Activated T-helper 1 cell treated with anti-CD3 and anti-CD28 coated beads, Interleukin-12 subunit alpha, Interleukin-12 subunit beta, Interleukin-2, Interleukin-4 antibody, amounts not matched to agents 30 ng/mL and 10 ng/mL and 1 ng/mL, durations not matched to agents 14 hours and 24 hours and 36 hours (primary cell): ENCODE measurements at regions of chr2 and their contacts with region 1.

Region 1: DNA sequence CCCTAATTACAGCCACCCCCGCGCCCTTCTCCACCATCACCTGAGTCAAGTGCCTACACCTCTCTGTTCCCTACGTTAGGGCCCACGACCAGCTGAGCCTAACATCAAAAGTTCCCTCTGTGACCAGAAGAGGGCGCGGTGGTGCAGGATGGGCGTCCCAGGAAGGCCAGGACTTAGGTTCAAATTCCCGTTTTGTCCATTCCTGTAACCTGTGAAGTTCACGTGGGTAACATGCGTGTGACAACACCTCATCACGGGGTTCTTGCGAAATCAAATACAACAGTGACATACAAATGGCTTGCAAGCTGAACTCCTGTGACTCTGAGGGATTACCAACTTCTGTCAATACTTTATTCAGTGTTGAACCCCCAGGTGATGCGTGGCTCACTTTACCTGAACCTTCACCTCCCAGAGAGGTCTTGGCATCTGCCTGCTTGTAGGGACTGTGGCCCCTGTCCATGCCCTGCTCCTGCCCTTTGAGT is 207.9 kb downstream of the ARL4C start:
- DNase-seq: peak; percentile 69
- H3K4me3 Mint-ChIP-seq: peak overlapping the region; percentile 80
- H3K27ac Mint-ChIP-seq: peak overlapping the region; percentile 99
- H3K4me1 Mint-ChIP-seq: peaks cover 91% of the 10 kb centered on the region
- H3K27me3 Mint-ChIP-seq: no peaks in the 10 kb centered on the region

Region 2: GRCh38 chr2:233756429-233757081 is 532.5 kb before region 1 on chr2:
- intact Hi-C with region 1: no loop called
- DNase-seq: no peak
- H3K4me3 Mint-ChIP-seq: no peak overlapping the region
- H3K27ac Mint-ChIP-seq: no peak overlapping the region
- H3K4me1 Mint-ChIP-seq: no peaks in the 10 kb centered on the region
- H3K27me3 Mint-ChIP-seq: peaks cover 2% of the 10 kb centered on the region

Region 3: DNA sequence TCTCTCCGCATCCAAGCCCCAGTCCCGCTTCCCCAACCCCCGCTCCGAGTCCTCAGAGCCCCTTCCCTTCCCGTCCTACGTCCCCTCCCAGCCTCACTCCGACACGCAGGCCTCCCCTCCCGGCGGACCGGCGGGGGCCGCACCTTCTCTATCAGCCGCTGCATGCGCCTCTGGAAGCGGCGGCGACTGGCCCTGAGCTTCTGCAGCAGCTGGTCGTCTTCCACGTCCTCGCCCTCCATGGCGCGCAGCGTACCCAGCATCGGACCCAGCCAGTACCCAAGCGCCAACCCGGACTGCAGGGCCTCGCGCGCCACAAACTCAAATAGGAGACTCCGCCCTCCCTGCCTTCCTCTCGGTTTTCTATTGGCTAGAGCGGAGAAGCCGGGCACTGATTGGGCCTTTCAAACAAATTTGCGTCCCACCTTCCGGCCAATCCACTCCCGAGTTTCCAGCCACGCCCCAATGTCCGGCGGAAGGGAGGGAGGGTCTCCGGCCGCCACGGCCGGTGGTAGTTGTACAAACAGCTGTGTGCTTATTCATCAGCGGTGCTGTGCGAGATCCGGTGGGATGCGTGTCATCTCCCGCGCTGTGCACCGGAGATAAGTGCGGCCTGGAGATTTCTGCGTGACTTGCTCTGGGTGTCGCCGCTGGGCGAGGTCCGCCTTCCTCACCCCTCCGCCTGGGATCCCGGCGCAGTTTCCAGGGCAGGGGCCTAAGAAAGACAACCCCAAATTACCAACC is 434.6 kb before region 1 on chr2 and contains the start of gene HJURP:
- intact Hi-C with region 1: loop called (anchors 10 kb)
- DNase-seq: peak; percentile 95
- H3K4me3 Mint-ChIP-seq: peak within 1 kb of the TSS; percentile 94
- H3K27ac Mint-ChIP-seq: peak within 1 kb of the TSS; percentile 97
- H3K4me1 Mint-ChIP-seq: peaks cover 63% of the 10 kb centered on the region
- H3K27me3 Mint-ChIP-seq: no peaks in the 10 kb centered on the region
- total RNA-seq, gene HJURP: 38.2 and 40.4 TPM in 2 replicates

Region 4: DNA sequence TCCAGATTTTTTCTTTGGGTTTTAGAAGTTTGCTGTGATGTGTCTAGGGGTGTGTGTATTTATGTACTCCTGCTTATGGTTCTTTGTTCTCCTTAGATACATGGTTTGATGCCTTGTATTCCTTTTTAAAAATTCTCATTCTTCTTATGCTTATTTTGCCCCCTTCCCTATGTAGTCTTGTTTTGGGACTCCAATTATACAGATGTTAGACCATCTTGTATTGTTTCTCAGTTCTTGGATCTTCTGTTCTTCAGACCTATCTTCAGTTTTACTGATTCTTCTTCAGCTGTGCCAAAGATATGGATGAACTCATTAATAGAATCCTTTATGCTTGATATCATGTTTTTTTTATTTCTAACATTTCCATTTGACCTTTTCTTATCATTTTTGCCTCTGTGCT is 406.7 kb before region 1 on chr2:
- intact Hi-C with region 1: no loop called
- DNase-seq: no peak
- H3K4me3 Mint-ChIP-seq: no peak overlapping the region
- H3K27ac Mint-ChIP-seq: no peak overlapping the region
- H3K4me1 Mint-ChIP-seq: no peaks in the 10 kb centered on the region
- H3K27me3 Mint-ChIP-seq: peaks cover 18% of the 10 kb centered on the region

Region 5: GRCh38 chr2:234135720-234136221 is 153.2 kb before region 1 on chr2:
- intact Hi-C with region 1: loop called (anchors 1 kb)
- DNase-seq: peak; percentile 43
- H3K4me3 Mint-ChIP-seq: no peak overlapping the region
- H3K27ac Mint-ChIP-seq: no peak overlapping the region
- H3K4me1 Mint-ChIP-seq: peaks cover 19% of the 10 kb centered on the region
- H3K27me3 Mint-ChIP-seq: peaks cover 10% of the 10 kb centered on the region

Region 6: DNA sequence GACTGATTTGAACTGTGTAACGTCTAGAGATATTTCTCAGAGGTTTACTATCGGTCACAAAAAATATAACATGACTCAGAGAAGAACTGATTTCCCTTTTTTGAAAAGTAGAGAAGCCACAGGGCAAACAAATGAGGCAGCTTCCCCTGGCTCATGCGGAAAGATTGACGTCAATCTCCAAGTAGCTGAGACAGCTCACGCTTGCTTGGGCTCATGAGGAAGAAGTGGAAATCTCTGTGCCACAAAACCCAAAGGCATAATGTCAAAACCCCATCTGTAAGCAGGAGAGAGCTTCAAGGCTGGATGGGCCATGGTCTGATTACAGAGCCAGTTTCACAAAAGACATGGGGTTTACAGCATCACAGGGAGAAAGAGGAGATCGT is 19.8 kb after region 1 on chr2:
- intact Hi-C with region 1: loop called (anchors 1 kb)
- DNase-seq: peak; percentile 79
- H3K4me3 Mint-ChIP-seq: peak overlapping the region; percentile 68
- H3K27ac Mint-ChIP-seq: peak overlapping the region; percentile 99
- H3K4me1 Mint-ChIP-seq: peaks cover 70% of the 10 kb centered on the region
- H3K27me3 Mint-ChIP-seq: no peaks in the 10 kb centered on the region

Region 7: DNA sequence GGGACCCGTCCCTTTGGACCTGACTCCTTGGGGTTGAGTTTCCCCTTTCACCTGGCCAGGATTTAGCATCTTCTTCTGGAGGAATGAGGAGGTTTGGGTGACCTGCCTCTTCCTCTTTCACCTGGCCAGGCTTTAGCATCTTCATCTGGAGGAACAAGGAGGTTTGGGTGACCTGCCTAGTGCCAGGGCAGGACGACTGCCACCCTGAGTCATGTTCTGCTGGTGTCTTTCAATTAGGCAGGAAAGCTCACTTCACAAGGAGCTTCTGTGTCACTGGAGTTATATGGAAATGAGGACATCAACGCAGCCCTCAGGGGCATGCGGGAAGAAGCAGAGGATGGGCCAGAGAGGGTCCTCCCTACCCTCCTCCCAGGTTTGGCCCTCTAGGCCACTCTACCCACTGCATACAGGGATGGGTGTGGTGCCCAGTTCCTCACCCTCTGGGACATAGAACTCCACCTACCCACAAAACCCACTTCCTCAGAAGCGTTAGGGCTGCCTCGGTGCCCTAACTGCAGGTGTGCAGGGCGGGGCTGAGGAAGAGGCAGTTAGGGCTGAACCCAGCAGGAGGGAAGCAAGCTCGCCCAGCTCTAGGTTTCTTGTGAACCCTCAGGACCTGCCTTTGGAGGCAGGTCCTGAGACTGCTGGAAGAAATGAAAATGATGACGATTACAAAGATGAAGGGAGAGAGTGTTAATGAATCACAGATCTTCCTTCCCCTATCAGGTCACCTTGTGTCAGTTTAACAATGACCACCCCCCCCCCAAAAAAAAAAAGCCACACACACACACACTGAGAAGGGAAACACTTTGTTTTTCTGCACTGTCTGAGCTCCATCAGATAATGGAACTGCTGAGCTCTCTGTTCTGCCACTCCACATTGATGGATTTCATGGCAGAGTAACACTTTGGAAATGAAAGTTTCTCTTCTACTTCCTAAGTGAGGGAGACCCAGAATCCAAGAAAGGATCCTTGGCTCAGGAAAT is 136.9 kb after region 1 on chr2:
- intact Hi-C with region 1: loop called (anchors 1 kb)
- DNase-seq: peak; percentile 75
- H3K4me3 Mint-ChIP-seq: peak overlapping the region; percentile 75
- H3K27ac Mint-ChIP-seq: peak overlapping the region; percentile 99
- H3K4me1 Mint-ChIP-seq: peaks cover 77% of the 10 kb centered on the region
- H3K27me3 Mint-ChIP-seq: no peaks in the 10 kb centered on the region

Region 8: DNA sequence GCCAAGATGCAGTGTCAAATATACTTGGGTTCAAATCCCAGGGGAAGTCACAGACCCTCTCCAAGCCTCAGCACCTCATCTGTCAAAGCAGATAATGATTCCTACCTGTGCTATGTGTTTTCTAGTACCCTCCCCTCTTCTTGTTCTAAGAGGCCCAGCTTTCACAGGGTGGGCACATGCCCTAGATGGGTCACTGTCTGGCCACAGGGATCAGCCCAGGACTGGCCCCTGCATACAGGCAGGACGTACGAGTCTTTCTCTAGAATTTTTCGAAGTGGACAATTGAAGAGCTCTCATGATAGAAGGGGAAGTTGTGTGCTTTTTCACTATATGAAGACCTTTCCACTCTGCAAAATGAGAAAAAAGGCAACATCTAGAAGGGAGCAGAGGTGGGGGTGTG is 185.6 kb after region 1 on chr2:
- intact Hi-C with region 1: loop called (anchors 1 kb)
- DNase-seq: no peak
- H3K4me3 Mint-ChIP-seq: no peak overlapping the region
- H3K27ac Mint-ChIP-seq: peak overlapping the region; percentile 91
- H3K4me1 Mint-ChIP-seq: peaks cover 53% of the 10 kb centered on the region
- H3K27me3 Mint-ChIP-seq: no peaks in the 10 kb centered on the region